ENCODE measurements at regions of chr3 and their contacts with region 1.

Region 1: DNA sequence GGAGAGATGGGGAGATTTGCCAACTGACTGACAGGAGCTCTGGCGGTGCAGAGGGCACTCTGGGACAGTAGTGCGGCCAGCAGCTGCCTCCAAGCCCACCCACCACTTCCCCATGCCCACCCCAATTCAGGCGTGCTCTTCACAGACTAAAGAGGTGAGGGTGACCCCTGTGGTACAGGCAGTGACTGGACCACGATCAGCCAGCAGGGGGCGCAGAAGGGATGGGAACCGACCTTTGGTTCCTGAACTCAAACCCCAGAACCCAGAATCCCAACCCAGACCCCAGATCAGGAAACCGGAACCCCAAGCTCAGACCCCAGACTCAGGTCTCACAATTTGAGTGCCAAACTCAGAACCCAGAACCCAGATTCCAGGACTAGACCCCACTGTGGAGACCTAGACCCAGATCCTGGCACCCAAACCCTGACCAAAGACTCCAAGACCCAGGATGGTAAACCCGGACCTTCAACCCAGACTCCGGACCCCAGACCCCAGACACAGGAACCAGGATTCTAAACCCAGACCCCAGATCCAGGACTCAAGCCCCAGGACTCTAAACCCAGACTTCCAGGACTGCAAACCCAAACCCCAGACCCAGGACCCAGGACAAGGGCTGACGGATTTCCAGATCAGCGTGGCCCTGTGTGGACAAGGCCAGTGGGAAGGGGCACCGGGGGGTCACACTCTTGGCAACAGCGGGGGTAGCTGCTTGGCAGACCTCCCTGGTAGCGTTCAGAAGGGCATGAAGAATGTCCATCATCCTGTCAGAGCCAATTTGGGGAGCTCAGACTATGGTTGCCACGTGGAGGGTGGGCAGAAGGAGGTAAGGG is 3.7 kb upstream of the MYL3 start:
- DNase-seq: peak; percentile 57 to 93 (median 79)
- ATAC-seq: peak; percentile 80
- H3K4me3 ChIP-seq: no peak overlapping the region
- H3K4me3 Mint-ChIP-seq: no peak overlapping the region
- H3K27ac ChIP-seq: no peak overlapping the region
- H3K27ac Mint-ChIP-seq: no peak overlapping the region
- H3K4me1 ChIP-seq: no peaks in the 10 kb centered on the region
- H3K4me1 Mint-ChIP-seq: no peaks in the 10 kb centered on the region
- H3K27me3 ChIP-seq: no peaks in the 10 kb centered on the region
- H3K27me3 Mint-ChIP-seq: no peaks in the 10 kb centered on the region
- CTCF ChIP-seq: peak; percentile 75

Region 2: DNA sequence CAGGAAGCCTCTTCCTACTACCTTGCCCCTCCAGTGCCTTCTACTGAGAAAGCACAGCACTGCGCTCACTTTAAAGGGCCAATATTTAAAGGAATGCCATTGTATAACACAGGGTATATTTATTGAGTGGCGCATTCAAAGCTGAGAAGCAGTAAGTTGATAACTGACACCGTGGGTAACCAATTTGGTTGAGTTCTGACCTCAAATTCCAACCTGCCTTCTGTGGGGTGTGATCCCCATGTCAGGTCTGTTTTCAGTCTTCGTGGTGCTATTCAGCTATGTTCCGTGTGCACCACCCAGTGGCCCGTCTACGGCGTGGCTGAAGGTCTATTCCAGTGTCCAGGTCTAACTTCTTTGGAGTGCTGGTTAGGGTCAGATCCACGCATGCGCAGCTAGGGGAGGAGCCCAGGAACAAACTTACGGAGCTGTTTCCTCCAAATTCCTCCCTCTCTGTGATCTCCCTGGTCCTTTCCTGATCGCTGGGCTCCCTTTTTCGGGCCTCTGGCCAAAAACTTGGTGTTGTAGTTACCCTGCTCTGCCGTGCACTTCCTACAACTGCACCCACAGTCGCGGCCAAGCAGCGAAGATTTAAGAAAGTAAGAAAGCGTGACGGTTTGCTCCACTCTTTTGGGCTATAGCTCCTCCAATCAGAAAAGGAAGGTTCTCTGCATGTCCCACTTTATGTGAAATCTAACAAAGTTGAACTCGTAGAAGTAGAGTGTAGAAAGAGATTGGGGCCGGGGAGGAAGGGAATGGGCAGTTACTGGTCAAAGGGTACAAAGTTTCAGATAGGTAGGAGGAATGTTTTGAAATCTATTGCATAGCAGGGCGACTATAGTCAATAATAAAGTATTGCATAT is 308.5 kb before region 1 on chr3:
- CTCF ChIA-PET with region 1: no interaction called
- POLR2A ChIA-PET with region 1: no interaction called
- intact Hi-C with region 1: no loop called
- DNase-seq: peak; percentile 37 to 89 (median 76)
- ATAC-seq: peak; percentile 97
- H3K4me3 ChIP-seq: peak overlapping the region; percentile 13 to 41
- H3K4me3 Mint-ChIP-seq: peak overlapping the region; percentile 80
- H3K27ac ChIP-seq: no peak overlapping the region
- H3K27ac Mint-ChIP-seq: peak overlapping the region; percentile 80
- H3K4me1 ChIP-seq: peaks cover 5% of the 10 kb centered on the region
- H3K4me1 Mint-ChIP-seq: peaks cover 17% of the 10 kb centered on the region
- H3K27me3 ChIP-seq: no peaks in the 10 kb centered on the region
- H3K27me3 Mint-ChIP-seq: no peaks in the 10 kb centered on the region
- CTCF ChIP-seq: peak; percentile 97

Region 3: GRCh38 chr3:46851364-46852333 is 15.3 kb before region 1 on chr3:
- CTCF ChIA-PET with region 1: interaction called, 21 read pairs
- POLR2A ChIA-PET with region 1: no interaction called
- intact Hi-C with region 1: no loop called
- DNase-seq: no peak
- ATAC-seq: no peak
- H3K4me3 ChIP-seq: no peak overlapping the region
- H3K4me3 Mint-ChIP-seq: no peak overlapping the region
- H3K27ac ChIP-seq: no peak overlapping the region
- H3K27ac Mint-ChIP-seq: no peak overlapping the region
- H3K4me1 ChIP-seq: peaks cover 2% of the 10 kb centered on the region
- H3K4me1 Mint-ChIP-seq: peaks cover under 1% of the 10 kb centered on the region
- H3K27me3 ChIP-seq: no peaks in the 10 kb centered on the region
- H3K27me3 Mint-ChIP-seq: no peaks in the 10 kb centered on the region
- CTCF ChIP-seq: no peak

Region 4: GRCh38 chr3:46895204-46895660 is 28.3 kb after region 1 on chr3:
- CTCF ChIA-PET with region 1: interaction called, 40 read pairs
- POLR2A ChIA-PET with region 1: no interaction called
- intact Hi-C with region 1: loop called (anchors 1 kb)
- DNase-seq: peak; percentile 61 to 87 (median 79)
- ATAC-seq: peak; percentile 91
- H3K4me3 ChIP-seq: no peak overlapping the region
- H3K4me3 Mint-ChIP-seq: no peak overlapping the region
- H3K27ac ChIP-seq: no peak overlapping the region
- H3K27ac Mint-ChIP-seq: no peak overlapping the region
- H3K4me1 ChIP-seq: no peaks in the 10 kb centered on the region
- H3K4me1 Mint-ChIP-seq: peaks cover 12% of the 10 kb centered on the region
- H3K27me3 ChIP-seq: peaks cover 4 to 18% of the 10 kb centered on the region in 2 experiments
- H3K27me3 Mint-ChIP-seq: peaks cover 54% of the 10 kb centered on the region
- CTCF ChIP-seq: peak; percentile 71

Region 5: DNA sequence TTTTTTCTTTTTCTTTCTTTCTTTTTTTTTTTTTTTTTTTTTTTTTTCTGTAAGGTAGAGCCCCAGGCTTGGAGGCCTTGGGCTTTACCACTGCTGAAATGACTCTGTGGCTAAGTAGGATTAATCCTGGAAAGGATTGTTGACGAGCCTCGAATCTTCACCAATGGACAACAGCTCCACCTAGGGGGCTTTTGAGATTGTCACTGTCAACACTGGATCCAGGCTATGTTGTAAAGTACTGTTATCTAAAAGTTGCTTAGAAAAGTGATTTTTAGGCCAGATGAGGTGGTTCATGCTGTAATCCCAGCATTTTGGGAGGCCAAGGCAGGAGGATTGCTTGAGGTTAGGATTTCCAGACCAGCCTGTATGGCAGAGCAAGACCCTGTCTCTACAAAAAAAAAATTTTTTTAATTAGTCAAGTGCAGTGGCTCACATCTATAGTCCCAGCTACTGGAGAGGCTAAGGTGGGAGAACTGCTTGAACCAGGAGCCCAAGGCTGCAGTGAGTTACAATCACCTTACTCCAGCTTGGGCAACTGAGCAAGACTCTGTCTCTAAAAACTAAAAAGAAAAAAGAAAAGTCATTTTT is 457.4 kb after region 1 on chr3:
- CTCF ChIA-PET with region 1: interaction called, 4 read pairs
- POLR2A ChIA-PET with region 1: no interaction called
- intact Hi-C with region 1: loop called (anchors 1 kb)
- DNase-seq: peak; percentile 6 to 69 (median 52)
- ATAC-seq: peak; percentile 56
- H3K4me3 ChIP-seq: no peak overlapping the region
- H3K4me3 Mint-ChIP-seq: no peak overlapping the region
- H3K27ac ChIP-seq: no peak overlapping the region
- H3K27ac Mint-ChIP-seq: no peak overlapping the region
- H3K4me1 ChIP-seq: no peaks in the 10 kb centered on the region
- H3K4me1 Mint-ChIP-seq: no peaks in the 10 kb centered on the region
- H3K27me3 ChIP-seq: no peaks in the 10 kb centered on the region
- H3K27me3 Mint-ChIP-seq: no peaks in the 10 kb centered on the region
- CTCF ChIP-seq: peak; percentile 70

Measured in CD8-positive, alpha-beta T cell (primary cell).